Mucosa of descending colon (tissue), 3 donors: ENCODE measurements at regions of chr5 and their contacts with region 1.

Region 1: DNA sequence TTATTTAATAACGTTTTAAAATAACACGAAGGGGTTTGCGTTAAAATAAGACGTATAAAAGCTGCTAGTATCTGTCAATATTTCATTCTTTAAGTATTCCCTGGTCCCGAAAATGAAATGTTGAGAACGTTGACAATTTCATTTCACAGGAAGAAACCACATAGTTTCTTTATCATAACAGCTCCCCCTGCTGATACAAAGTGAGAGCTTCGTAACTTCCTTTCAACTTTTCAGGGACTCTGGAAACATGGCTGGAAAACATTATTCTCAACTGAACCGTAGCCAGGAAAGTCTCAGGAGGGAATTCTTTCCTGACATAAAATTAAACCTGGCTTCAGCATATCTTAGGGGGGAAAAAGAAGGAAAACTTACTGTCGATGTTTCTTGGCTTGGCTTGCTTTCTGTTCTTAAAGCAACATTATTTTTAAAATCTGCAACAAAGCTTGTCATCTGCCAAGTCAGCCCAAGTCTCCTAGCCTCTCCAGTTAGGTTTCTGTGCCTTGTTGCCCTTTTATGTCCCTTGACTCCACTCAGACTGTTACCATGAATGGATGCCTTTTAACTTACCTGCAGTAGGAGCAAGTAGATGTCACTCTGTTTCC is 122.9 kb upstream of the DAB2 start:
- DNase-seq: peak in 1 of 3 donors; percentile 84
- ATAC-seq: peak; percentile 83
- H3K4me3 ChIP-seq: no peak overlapping the region
- H3K4me1 ChIP-seq: peaks cover 7% of the 10 kb centered on the region
- CTCF ChIP-seq: no peak

Region 2: DNA sequence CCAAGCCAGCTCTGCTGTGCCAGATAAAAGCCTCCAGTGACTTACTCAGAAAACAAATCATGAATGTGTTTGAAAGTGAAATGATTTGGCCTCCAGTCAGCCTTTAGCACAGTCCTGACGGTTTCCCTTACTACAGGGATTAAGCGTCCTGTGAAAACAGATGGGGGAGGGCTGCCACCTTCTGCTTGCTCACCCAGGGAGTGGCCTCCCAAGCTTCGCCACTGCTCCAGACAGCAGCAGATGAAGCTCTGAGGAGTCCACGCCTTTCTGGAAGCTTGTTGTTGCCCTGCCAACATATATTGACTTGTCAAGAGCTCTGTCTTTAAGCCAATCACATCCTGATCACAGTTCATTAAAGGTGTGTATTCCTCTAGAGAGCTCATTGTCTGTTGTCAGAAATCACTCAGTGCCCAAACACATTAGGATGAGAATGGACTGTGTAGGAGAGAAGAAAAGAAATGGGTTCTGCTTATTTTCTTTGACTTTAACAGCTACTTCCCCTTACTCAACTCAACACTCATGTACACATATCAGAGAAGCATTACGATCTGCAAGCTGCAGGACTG is 323.4 kb before region 1 on chr5:
- intact Hi-C with region 1: loop called in 1 of 2 experiments (anchors 10 kb)
- DNase-seq: peak; percentile 60 to 73 (median 70)
- ATAC-seq: peak; percentile 94
- H3K4me3 ChIP-seq: no peak overlapping the region
- H3K4me1 ChIP-seq: no peaks in the 10 kb centered on the region
- CTCF ChIP-seq: no peak

Region 3: GRCh38 chr5:39376293-39376714 is 171.3 kb before region 1 on chr5:
- intact Hi-C with region 1: loop called (anchors 2 to 5 kb)
- DNase-seq: peak in 1 of 3 donors; percentile 80
- ATAC-seq: peak; percentile 69
- H3K4me3 ChIP-seq: no peak overlapping the region
- H3K4me1 ChIP-seq: peaks cover 5% of the 10 kb centered on the region
- CTCF ChIP-seq: peak; percentile 41